ENCODE measurements at regions of chr15 and their contacts with region 1.

Region 1: DNA sequence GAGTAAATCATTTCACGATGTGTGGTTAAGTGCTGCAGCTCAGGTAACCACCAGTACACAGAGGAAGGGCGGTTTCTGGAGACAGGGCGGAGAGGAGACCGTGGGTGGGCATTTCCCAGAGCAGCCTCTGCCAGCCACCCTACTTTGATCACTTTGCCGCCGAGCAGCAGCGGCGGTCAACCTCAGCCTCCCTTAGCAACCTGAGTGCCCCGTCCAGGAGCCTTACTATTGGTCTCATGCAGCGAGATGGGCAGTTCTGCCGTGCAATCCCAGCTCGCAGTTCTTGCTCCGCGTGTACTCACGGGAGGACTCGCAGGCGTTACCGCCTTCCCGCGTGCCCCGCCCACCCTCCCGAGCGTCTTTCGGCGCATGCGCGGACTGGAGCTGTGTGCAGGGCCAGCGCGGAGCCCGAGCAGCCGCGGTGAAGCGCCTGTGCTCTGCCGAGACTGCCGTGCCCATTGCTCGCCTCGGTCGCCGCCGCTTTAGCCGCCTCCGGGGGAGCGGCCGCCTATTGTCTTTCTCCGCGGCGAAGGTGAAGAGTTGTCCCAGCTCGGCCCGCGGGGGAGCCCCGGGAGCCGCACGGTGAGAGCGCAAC is at the start of gene AKAP13:
- DNase-seq: peak; percentile 97
- ATAC-seq: peak; percentile 78
- H3K4me3 ChIP-seq: peak within 1 kb of the TSS; percentile 65 to 90 (median 69)
- H3K4me3 Mint-ChIP-seq: peak within 1 kb of the TSS; percentile 86
- H3K27ac ChIP-seq: peak within 1 kb of the TSS; percentile 79 to 85
- H3K27ac Mint-ChIP-seq: peak within 1 kb of the TSS; percentile 90
- H3K4me1 ChIP-seq: peaks cover 35 to 42% of the 10 kb centered on the region in 2 donors
- H3K4me1 Mint-ChIP-seq: peaks cover 44% of the 10 kb centered on the region
- H3K27me3 ChIP-seq: peaks cover 0 to 4% (median 0%) of the 10 kb centered on the region in 4 experiments
- H3K27me3 Mint-ChIP-seq: peaks cover 4% of the 10 kb centered on the region
- CTCF ChIP-seq: no peak
- total RNA-seq, gene AKAP13: 358 and 380 TPM in 2 replicates

Region 2: GRCh38 chr15:84766446-84767035 is 613.8 kb before region 1 on chr15:
- CTCF ChIA-PET with region 1: no interaction called
- POLR2A ChIA-PET with region 1: no interaction called
- intact Hi-C with region 1: no loop called
- DNase-seq: no peak
- ATAC-seq: no peak
- H3K4me3 ChIP-seq: no peak overlapping the region
- H3K4me3 Mint-ChIP-seq: no peak overlapping the region
- H3K27ac ChIP-seq: no peak overlapping the region
- H3K27ac Mint-ChIP-seq: no peak overlapping the region
- H3K4me1 ChIP-seq: peaks cover 20% of the 10 kb centered on the region in 2 donors
- H3K4me1 Mint-ChIP-seq: peaks cover 37% of the 10 kb centered on the region
- H3K27me3 ChIP-seq: no peaks in the 10 kb centered on the region
- H3K27me3 Mint-ChIP-seq: no peaks in the 10 kb centered on the region
- CTCF ChIP-seq: no peak

Region 3: DNA sequence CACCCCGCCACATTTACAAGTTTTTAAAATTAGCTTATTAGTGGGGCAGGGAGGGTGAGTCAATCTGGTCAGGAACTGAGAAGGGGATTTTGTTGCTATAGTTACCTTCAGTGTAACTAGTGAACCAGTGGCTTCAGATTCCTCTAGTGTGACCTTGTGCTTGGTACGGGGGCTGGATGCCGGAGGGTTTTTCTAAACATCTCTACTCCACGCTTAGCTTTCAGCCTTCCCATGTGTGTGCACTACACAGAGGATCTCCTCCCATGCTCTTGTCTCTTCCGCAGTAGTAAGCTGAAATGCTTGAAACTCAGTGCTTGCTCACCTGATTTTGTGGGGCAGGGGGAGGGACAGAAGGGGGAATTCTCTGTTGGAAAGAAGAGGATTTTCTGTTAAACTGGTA is 67.8 kb before region 1 on chr15:
- CTCF ChIA-PET with region 1: interaction called, 8 read pairs
- POLR2A ChIA-PET with region 1: interaction called, 11 read pairs
- intact Hi-C with region 1: loop called (anchors 2 kb)
- DNase-seq: peak; percentile 86
- ATAC-seq: peak; percentile 84
- H3K4me3 ChIP-seq: peak overlapping the region in 4 of 5 experiments; percentile 28 to 59 (median 51)
- H3K4me3 Mint-ChIP-seq: peak overlapping the region; percentile 89
- H3K27ac ChIP-seq: peak overlapping the region; percentile 87 to 97
- H3K27ac Mint-ChIP-seq: peak overlapping the region; percentile 95
- H3K4me1 ChIP-seq: peaks cover 56 to 63% of the 10 kb centered on the region in 2 donors
- H3K4me1 Mint-ChIP-seq: peaks cover 87% of the 10 kb centered on the region
- H3K27me3 ChIP-seq: no peaks in the 10 kb centered on the region
- H3K27me3 Mint-ChIP-seq: no peaks in the 10 kb centered on the region
- CTCF ChIP-seq: no peak

Region 4: DNA sequence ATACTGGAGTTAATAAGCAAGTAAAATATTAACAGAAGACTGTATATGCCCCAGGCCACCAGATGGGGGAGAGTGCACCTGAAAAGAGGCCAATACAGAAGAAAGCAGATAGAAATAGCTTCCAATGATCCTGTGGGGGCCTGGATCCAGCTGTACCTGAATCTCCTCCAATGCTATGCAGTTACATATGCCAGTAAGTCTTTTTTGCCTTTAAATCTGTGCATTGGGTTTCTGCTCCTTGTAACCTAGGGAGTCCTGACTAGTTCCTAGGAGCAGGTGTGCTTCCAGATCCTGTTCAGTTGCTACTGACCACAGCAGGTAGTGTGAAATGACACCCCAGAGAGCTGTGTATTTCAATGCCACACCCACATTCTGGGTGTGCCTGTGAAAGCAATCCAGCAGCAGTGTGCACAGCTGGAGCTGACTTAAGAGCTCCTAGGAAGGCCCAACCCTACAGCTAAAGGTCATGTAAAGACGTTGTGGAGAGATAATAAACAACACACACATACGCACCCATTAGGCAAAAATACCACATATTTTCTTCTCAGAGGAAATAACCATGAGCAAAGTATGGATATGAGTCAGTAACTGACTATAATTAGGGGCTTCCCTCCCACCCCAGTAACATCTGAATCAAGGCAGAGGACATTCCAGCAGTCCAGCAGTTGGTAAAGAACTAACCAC is 62.1 kb before region 1 on chr15:
- CTCF ChIA-PET with region 1: interaction called, 8 read pairs
- POLR2A ChIA-PET with region 1: interaction called, 3 read pairs
- intact Hi-C with region 1: loop called (anchors 1 kb)
- DNase-seq: peak; percentile 42
- ATAC-seq: peak; percentile 90
- H3K4me3 ChIP-seq: no peak overlapping the region
- H3K4me3 Mint-ChIP-seq: peak overlapping the region; percentile 46
- H3K27ac ChIP-seq: peak overlapping the region; percentile 20 to 29
- H3K27ac Mint-ChIP-seq: peak overlapping the region; percentile 83
- H3K4me1 ChIP-seq: peaks cover 39 to 40% of the 10 kb centered on the region in 2 donors
- H3K4me1 Mint-ChIP-seq: peaks cover 63% of the 10 kb centered on the region
- H3K27me3 ChIP-seq: no peaks in the 10 kb centered on the region
- H3K27me3 Mint-ChIP-seq: no peaks in the 10 kb centered on the region
- CTCF ChIP-seq: peak; percentile 29

Region 5: GRCh38 chr15:85443593-85444087 is 63.3 kb after region 1 on chr15:
- CTCF ChIA-PET with region 1: no interaction called
- POLR2A ChIA-PET with region 1: no interaction called
- intact Hi-C with region 1: loop called (anchors 5 kb)
- DNase-seq: peak; percentile 77
- ATAC-seq: peak; percentile 71
- H3K4me3 ChIP-seq: peak overlapping the region in 1 of 5 experiments; percentile 46
- H3K4me3 Mint-ChIP-seq: peak overlapping the region; percentile 64
- H3K27ac ChIP-seq: peak overlapping the region; percentile 53 to 80
- H3K27ac Mint-ChIP-seq: peak overlapping the region; percentile 82
- H3K4me1 ChIP-seq: peaks cover 35 to 41% of the 10 kb centered on the region in 2 donors
- H3K4me1 Mint-ChIP-seq: peaks cover 68% of the 10 kb centered on the region
- H3K27me3 ChIP-seq: no peaks in the 10 kb centered on the region
- H3K27me3 Mint-ChIP-seq: no peaks in the 10 kb centered on the region
- CTCF ChIP-seq: no peak

Region 6: DNA sequence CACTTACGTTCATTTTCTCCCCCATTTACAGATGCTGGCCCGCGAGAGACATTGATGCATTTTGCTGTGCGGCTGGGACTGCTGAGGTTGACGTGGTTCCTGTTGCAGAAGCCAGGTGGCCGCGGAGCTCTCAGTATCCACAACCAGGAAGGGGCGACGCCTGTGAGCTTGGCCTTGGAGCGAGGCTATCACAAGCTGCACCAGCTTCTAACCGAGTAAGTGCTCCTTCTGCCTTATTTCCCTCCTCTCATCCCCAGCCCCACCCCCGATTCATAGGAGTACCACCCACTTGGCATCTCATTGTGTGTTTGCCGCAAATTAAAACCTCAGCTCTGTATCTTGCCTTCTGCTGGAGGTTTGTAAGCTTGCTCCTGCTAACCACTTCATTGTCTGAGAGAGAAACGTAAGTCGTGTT is 163.4 kb after region 1 on chr15:
- CTCF ChIA-PET with region 1: no interaction called
- POLR2A ChIA-PET with region 1: no interaction called
- intact Hi-C with region 1: loop called (anchors 5 kb)
- DNase-seq: peak; percentile 60
- ATAC-seq: peak; percentile 67
- H3K4me3 ChIP-seq: peak overlapping the region in 1 of 5 experiments; percentile 42
- H3K4me3 Mint-ChIP-seq: peak overlapping the region; percentile 60
- H3K27ac ChIP-seq: peak overlapping the region; percentile 28 to 42
- H3K27ac Mint-ChIP-seq: peak overlapping the region; percentile 62
- H3K4me1 ChIP-seq: peaks cover 54 to 59% of the 10 kb centered on the region in 2 donors
- H3K4me1 Mint-ChIP-seq: peaks cover 67% of the 10 kb centered on the region
- H3K27me3 ChIP-seq: no peaks in the 10 kb centered on the region
- H3K27me3 Mint-ChIP-seq: no peaks in the 10 kb centered on the region
- CTCF ChIP-seq: no peak